PC-3 (cell line): ENCODE measurements at regions of chr2 and their contacts with region 1.

Region 1: GRCh38 chr2:42086500-42086953 is 38.7 kb downstream of the PKDCC start:
- DNase-seq: peak; percentile 83
- ATAC-seq: peak; percentile 60
- H3K4me3 ChIP-seq: no peak overlapping the region
- H3K27ac ChIP-seq: no peak overlapping the region
- H3K4me1 ChIP-seq: peaks cover 13% of the 10 kb centered on the region
- H3K27me3 ChIP-seq: no peaks in the 10 kb centered on the region
- CTCF ChIP-seq: peak; percentile 89

Region 2: DNA sequence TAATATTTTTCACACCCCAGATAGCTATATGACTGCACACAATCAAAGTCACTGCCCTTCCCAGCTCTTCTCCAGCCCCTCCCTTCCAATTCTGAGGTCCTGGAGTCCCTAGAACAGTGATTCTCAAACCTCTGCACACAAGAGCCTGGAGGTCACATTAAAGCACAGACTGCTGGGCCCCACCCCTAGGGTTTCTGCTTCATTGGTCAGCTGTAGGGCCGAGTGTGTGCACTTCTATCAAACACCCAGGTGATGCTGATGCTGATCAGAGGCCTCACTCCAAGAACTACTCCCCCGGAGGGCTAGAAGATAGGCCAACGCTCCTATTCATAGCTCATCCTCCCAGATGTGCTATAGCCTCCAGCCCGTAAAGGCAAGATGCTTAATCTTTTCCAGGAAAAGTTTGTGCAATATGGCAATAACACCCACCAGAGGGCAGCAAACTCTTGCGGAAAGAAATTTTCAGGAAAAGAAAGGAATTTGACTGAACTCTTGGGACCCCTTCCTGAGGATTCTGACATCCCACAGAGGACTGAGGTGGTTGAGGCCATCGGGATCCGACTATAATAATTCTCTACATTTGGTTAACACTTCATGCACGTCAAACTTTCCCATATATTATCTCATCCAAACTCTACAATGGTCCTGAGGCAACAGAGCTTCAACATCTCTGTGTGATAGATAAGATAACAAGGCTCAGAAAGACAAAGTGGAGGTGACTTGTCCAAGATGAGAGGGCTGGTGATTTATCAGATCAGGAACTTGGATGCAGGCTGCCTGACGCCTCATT is 232.9 kb before region 1 on chr2:
- CTCF ChIA-PET with region 1: interaction called, 29 read pairs
- POLR2A ChIA-PET with region 1: no interaction called
- intact Hi-C with region 1: loop called (anchors 1 kb)
- DNase-seq: peak; percentile 82
- ATAC-seq: peak; percentile 63
- H3K4me3 ChIP-seq: no peak overlapping the region
- H3K27ac ChIP-seq: no peak overlapping the region
- H3K4me1 ChIP-seq: no peaks in the 10 kb centered on the region; the same call in 1 of the 2 replicates
- H3K27me3 ChIP-seq: no peaks in the 10 kb centered on the region
- CTCF ChIP-seq: peak; percentile 94

Region 3: DNA sequence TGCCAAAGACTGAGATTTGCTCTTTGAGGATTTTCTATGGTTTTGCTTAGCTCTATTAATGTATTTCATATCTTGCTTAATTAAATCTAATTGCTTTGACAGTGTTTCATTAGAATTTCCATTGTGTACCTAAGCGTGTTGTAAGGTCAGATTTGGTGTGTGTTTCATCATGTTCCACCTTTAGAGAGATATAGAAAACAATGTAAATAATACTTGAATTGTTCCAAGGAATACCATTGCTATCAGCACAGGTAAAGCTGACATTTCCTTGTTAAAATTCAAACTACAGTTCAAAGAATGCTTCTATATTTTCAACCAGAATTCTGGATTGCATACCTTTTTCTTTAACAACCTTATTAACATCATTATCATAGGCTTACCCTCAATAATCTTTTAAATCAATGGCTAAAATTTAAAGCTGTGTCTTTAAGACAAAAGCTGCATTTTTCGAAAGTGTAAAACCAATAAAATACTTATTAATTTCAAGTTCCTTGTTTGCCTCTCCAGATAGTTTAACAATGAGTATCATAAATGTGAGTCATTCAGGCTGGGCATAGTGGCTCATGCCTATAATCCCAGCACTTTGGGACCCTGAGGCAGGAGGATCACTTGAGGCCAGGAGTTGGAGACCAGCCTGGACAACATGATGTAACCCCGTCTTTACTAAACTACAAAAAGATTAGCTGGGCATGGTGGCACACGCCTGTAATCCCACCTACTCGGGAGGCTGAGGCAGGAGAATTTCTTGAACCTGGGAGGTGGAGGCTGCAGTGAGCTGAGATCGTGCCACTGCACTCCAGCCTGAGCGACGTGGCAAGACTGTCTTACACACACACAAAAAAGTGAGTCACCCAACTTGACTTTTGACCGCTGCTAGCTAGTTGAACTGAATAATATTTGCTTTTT is 226.7 kb before region 1 on chr2:
- CTCF ChIA-PET with region 1: interaction called, 4 read pairs
- POLR2A ChIA-PET with region 1: no interaction called
- intact Hi-C with region 1: loop called (anchors 2 kb)
- DNase-seq: peak; percentile 84
- ATAC-seq: peak; percentile 93
- H3K4me3 ChIP-seq: peak overlapping the region; percentile 32; the same call in 1 of the 2 replicates
- H3K27ac ChIP-seq: peak overlapping the region; percentile 87
- H3K4me1 ChIP-seq: peaks cover 27% of the 10 kb centered on the region
- H3K27me3 ChIP-seq: no peaks in the 10 kb centered on the region
- CTCF ChIP-seq: no peak

Region 4: DNA sequence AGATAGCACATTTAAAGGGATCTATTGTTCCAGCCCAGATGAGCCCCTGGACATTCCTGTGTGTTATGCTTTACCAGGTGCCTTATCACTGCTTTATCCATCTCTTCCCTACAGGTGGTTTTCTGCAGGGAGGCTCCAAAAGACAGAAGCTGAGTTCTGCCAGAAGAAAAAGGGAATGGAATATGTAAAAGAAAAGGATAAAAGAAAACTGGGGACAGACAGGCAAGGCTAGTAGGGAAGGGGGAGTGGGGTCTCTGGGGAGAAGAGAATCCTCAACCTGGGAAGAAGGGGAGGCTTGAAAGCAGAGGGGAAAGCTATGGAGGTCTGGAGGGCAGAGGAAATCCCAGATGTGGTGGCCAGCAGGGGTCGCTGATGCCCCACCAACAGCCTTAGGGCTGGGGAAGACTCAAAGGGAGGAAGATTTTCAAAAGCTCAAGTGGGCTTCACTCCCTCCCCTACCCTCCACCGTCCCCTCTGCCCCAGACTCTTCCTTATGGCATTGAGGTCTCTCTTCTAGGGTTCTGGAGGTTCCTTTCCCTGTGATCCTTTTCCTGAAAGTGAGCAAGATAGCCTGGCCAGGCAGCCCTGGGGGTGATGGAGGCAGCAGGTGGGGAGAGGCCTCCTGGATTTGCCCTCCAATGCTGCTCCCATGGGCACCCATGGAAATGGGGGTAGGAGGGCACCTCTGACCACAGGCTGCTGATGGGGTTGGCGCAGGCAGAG is 216.8 kb before region 1 on chr2:
- CTCF ChIA-PET with region 1: interaction called, 12 read pairs
- POLR2A ChIA-PET with region 1: no interaction called
- intact Hi-C with region 1: loop called (anchors 1 kb)
- DNase-seq: peak; percentile 79
- ATAC-seq: peak; percentile 92
- H3K4me3 ChIP-seq: no peak overlapping the region
- H3K27ac ChIP-seq: no peak overlapping the region
- H3K4me1 ChIP-seq: peaks cover 5% of the 10 kb centered on the region
- H3K27me3 ChIP-seq: no peaks in the 10 kb centered on the region
- CTCF ChIP-seq: peak; percentile 90

Region 5: GRCh38 chr2:41966431-41966893 is 120.1 kb before region 1 on chr2:
- CTCF ChIA-PET with region 1: no interaction called
- POLR2A ChIA-PET with region 1: no interaction called
- intact Hi-C with region 1: loop called (anchors 2 kb)
- DNase-seq: peak; percentile 96
- ATAC-seq: peak; percentile 96
- H3K4me3 ChIP-seq: no peak overlapping the region
- H3K27ac ChIP-seq: no peak overlapping the region
- H3K4me1 ChIP-seq: peaks cover 31% of the 10 kb centered on the region
- H3K27me3 ChIP-seq: no peaks in the 10 kb centered on the region
- CTCF ChIP-seq: no peak